HCT116 (cell line): ENCODE measurements at regions of chr6 and their contacts with region 1.

Region 1: GRCh38 chr6:152723398-152723797 is 25.7 kb downstream of the MYCT1 start:
- DNase-seq: no peak
- ATAC-seq: no peak
- H3K4me3 ChIP-seq: no peak overlapping the region
- H3K27ac ChIP-seq: no peak overlapping the region
- H3K4me1 ChIP-seq: no peaks in the 10 kb centered on the region
- H3K27me3 ChIP-seq: no peaks in the 10 kb centered on the region
- CTCF ChIP-seq: no peak
- POLR2A ChIP-seq: no peak
- RAD21 ChIP-seq: no peak

Region 2: GRCh38 chr6:151900730-151901433 is 822.5 kb before region 1 on chr6:
- CTCF ChIA-PET with region 1: no interaction called
- POLR2A ChIA-PET with region 1: no interaction called
- RAD21 ChIA-PET with region 1: no interaction called
- intact Hi-C with region 1: no loop called
- DNase-seq: no peak
- ATAC-seq: no peak
- H3K4me3 ChIP-seq: no peak overlapping the region
- H3K27ac ChIP-seq: no peak overlapping the region
- H3K4me1 ChIP-seq: peaks cover 0 to 4% of the 10 kb centered on the region in 2 experiments; a peak in 1 of 4 replicates
- H3K27me3 ChIP-seq: no peaks in the 10 kb centered on the region
- CTCF ChIP-seq: no peak
- POLR2A ChIP-seq: no peak
- RAD21 ChIP-seq: no peak

Region 3: DNA sequence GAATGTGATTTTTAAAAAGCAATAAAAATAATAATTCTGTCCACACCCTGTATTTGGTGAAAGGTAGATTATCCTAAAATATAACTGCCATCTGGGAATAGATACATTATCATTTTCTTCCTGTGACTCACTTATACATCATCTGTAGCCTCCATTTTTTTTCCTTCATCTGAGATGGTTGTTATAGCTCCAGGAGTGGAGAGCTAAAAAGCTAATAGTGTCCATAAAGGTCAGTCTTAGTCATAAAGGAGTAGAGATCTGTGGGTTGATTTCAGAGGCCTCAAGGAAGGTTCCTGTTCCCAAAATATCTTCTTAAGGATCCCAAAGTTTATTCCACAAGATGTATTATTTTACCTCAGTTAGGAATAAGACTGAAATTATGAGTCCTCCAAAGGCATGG is 218.3 kb after region 1 on chr6:
- CTCF ChIA-PET with region 1: no interaction called
- POLR2A ChIA-PET with region 1: no interaction called
- RAD21 ChIA-PET with region 1: no interaction called
- intact Hi-C with region 1: loop called (anchors 2 kb)
- DNase-seq: no peak
- ATAC-seq: no peak
- H3K4me3 ChIP-seq: no peak overlapping the region
- H3K27ac ChIP-seq: no peak overlapping the region
- H3K4me1 ChIP-seq: no peaks in the 10 kb centered on the region
- H3K27me3 ChIP-seq: peaks cover 60% of the 10 kb centered on the region
- CTCF ChIP-seq: no peak
- POLR2A ChIP-seq: no peak
- RAD21 ChIP-seq: no peak